ENCODE measurements at regions of chr17 and their contacts with region 1.

Region 1: DNA sequence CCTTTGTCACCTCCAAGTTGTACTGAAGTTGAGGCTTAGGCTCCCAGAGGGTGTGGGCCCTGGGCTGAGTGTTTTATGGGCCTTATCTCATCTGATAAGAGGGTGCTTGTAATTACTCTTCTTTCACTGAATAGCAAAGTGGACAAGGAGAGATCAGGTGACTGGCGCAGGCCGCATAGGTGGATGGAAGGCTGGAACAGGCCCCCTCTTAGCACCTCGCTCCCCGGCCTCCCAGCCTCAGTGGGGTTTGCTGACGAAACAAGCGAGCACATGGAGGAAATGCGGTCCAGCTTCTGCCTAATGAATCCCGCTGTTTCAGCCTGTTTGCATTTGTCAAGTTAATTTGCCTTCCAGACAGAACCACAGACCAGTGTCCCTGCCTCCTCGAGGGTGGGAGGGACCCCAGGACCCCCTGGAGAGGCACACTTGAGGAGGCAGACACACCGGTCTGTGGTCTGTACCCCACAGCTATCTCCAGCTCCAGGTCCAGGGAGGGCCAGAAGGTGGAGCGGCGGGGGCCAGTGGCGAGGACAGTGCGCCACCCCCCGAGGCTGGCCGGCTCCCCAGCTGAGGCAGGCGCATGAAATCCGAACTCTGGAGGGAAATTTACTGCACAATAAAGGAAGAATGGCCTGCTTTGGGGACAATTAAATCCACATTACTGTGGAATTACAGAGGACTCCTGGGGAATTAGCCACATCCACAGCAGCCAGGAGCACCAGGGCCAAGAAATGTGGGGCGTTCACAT is 123.4 kb downstream of the NTN1 start:
- DNase-seq: no peak
- ATAC-seq: no peak
- H3K4me3 ChIP-seq: no peak overlapping the region
- H3K27ac ChIP-seq: no peak overlapping the region
- H3K4me1 ChIP-seq: no peaks in the 10 kb centered on the region
- H3K27me3 ChIP-seq: peaks cover 0 to 1% (median 0%) of the 10 kb centered on the region in 3 donors
- CTCF ChIP-seq: no peak

Region 2: DNA sequence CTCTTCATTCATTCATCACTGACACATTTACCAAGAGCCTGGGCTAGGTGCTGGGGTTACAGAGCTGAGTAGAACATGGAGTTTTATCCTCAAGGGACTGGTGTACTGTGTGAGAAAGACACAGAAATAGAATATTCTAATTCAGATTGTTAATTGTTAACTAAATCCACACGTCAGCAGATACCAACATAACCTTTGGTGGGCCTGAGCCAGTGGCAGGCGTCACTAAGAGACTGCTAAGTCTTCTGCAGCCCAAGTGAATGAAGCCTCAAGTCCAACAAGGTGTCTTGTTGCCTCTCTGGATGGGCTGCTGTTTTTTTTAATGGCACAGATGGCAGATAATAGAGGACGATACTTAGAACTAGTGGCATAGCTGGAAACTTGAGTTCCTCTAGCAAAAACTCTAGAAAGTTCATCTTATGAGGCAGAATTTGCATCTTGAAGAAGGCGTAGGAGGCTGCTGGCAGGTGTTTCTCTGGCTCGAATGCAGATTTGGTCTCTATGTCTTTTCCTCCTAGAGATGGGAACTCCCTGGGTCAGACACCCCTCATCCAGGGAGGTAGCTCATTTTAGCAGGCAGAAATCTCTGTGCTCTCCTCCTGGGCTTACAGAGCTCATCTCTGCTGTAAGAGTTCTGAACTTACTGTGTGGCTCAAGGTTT is 56.2 kb after region 1 on chr17:
- intact Hi-C with region 1: loop called in 1 of 2 experiments (anchors 10 kb)
- DNase-seq: no peak
- ATAC-seq: peak in 1 of 4 donors; percentile 3
- H3K4me3 ChIP-seq: peak overlapping the region; percentile 22
- H3K27ac ChIP-seq: peak overlapping the region; percentile 56
- H3K4me1 ChIP-seq: peaks cover 15% of the 10 kb centered on the region
- H3K27me3 ChIP-seq: no peaks in the 10 kb centered on the region
- CTCF ChIP-seq: no peak

Measured in psoas muscle (tissue), 8 donors.